HepG2 (cell line): ENCODE measurements at regions of chr19 and their contacts with region 1.

Region 1: GRCh38 chr19:3984908-3985642 is at the start of gene EEF2:
- DNase-seq: peak; percentile 69
- ATAC-seq: peak; percentile 31
- H3K4me3 ChIP-seq: peak within 1 kb of the TSS; percentile 93 to 100 (median 95)
- H3K27ac ChIP-seq: peak within 1 kb of the TSS; percentile 92
- H3K4me1 ChIP-seq: peaks cover 57% of the 10 kb centered on the region
- H3K27me3 ChIP-seq: no peaks in the 10 kb centered on the region; a peak in 1 of 5 replicates
- CTCF ChIP-seq: no peak
- EP300 ChIP-seq: peak in 1 of 2 experiments; percentile 28; a peak in 1 of 4 replicates
- POLR2A ChIP-seq: peak; percentile 99
- RAD21 ChIP-seq: peak; percentile 59
- total RNA-seq, gene EEF2: 1,722 and 1,777 TPM in 2 replicates

Region 2: GRCh38 chr19:3970808-3971598 is 14.1 kb before region 1 on chr19 and contains the start of gene DAPK3:
- CTCF ChIA-PET with region 1: no interaction called
- POLR2A ChIA-PET with region 1: interaction called, 118 read pairs
- in situ Hi-C with region 1: no loop called
- intact Hi-C with region 1: no loop called
- DNase-seq: peak; percentile 95
- ATAC-seq: peak; percentile 80
- H3K4me3 ChIP-seq: peak within 1 kb of the TSS; percentile 95 to 98 (median 97)
- H3K27ac ChIP-seq: peak within 1 kb of the TSS; percentile 72
- H3K4me1 ChIP-seq: peaks cover 28% of the 10 kb centered on the region
- H3K27me3 ChIP-seq: no peaks in the 10 kb centered on the region; a peak in 1 of 5 replicates
- CTCF ChIP-seq: no peak
- EP300 ChIP-seq: no peak
- POLR2A ChIP-seq: peak; percentile 50 to 68
- RAD21 ChIP-seq: no peak; the same call in 1 of the 2 replicates
- total RNA-seq, gene DAPK3: 22.0 and 30.5 TPM in 2 replicates

Region 3: GRCh38 chr19:4007021-4007835 is 22.2 kb after region 1 on chr19 and contains the start of gene PIAS4:
- CTCF ChIA-PET with region 1: no interaction called
- POLR2A ChIA-PET with region 1: interaction called, 12 read pairs
- in situ Hi-C with region 1: no loop called
- intact Hi-C with region 1: no loop called
- DNase-seq: peak; percentile 87
- ATAC-seq: peak; percentile 91
- H3K4me3 ChIP-seq: peak within 1 kb of the TSS; percentile 90 to 100 (median 98)
- H3K27ac ChIP-seq: peak within 1 kb of the TSS; percentile 78
- H3K4me1 ChIP-seq: peaks cover 33% of the 10 kb centered on the region
- H3K27me3 ChIP-seq: no peaks in the 10 kb centered on the region; a peak in 1 of 5 replicates
- CTCF ChIP-seq: peak; percentile 35
- EP300 ChIP-seq: no peak; a peak in 1 of 4 replicates
- POLR2A ChIP-seq: peak; percentile 55 to 90; a peak in 3 of 4 replicates
- RAD21 ChIP-seq: peak; percentile 43; the same call in 1 of the 2 replicates
- total RNA-seq, gene PIAS4: 20.1 and 22.4 TPM in 2 replicates

Region 4: DNA sequence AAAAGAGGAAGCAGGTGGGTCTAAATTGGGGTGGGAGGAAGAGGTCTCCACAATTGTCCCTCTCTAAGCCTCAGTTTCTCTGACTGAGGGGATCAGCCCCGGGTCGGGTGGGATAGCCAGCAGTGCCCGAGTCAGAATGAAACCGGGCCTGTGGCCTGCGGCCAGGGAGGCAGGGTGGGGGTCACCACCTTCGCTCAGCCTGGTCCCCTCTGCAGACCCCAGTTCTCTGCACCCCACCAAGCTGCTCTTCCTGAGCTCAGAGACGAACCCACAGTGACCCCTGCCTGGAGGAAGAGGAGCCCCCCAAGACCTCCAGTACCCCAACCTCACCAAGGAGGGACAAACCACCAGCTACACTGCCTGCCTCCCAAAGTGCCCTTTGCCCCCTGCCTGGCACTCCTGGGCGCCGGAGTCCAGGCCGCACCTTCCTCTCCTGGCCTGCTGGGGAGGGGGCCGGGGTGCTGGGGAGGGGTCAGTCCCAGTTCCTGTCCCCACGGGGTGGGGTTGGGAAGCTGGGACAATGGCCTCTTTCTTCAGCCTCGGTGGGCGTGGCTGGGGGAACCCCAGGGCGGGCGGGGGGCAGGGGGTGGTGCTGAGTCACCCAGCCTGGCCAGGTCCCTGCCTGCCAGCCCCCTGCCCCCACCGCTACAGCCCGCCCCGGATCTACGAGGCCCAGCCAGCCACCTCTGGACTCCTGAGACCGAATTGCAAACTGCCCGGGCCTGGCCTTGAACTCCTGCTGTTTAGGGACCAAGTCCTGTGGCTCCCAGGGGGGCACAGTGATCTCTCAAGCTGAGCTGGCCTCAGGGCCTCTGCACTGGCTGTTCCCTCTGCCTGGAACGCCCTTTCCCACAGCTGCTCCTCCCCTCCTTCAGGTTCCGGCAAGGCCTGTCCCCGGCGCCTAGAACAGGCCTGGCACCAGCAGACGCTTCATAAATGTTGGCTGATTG is 67.2 kb after region 1 on chr19:
- CTCF ChIA-PET with region 1: no interaction called
- POLR2A ChIA-PET with region 1: interaction called, 5 read pairs
- in situ Hi-C with region 1: no loop called
- intact Hi-C with region 1: loop called (anchors 1 kb)
- DNase-seq: peak; percentile 95
- ATAC-seq: peak; percentile 86
- H3K4me3 ChIP-seq: peak overlapping the region; percentile 42 to 70 (median 44); a peak in 5 of 6 replicates
- H3K27ac ChIP-seq: peak overlapping the region; percentile 99
- H3K4me1 ChIP-seq: peaks cover 33% of the 10 kb centered on the region
- H3K27me3 ChIP-seq: no peaks in the 10 kb centered on the region
- CTCF ChIP-seq: no peak; the same call in none of the 2 replicates
- EP300 ChIP-seq: peak; percentile 76 to 84; a peak in 3 of 4 replicates
- POLR2A ChIP-seq: peak; percentile 67; a peak in 3 of 4 replicates
- RAD21 ChIP-seq: peak; percentile 74

Region 5: DNA sequence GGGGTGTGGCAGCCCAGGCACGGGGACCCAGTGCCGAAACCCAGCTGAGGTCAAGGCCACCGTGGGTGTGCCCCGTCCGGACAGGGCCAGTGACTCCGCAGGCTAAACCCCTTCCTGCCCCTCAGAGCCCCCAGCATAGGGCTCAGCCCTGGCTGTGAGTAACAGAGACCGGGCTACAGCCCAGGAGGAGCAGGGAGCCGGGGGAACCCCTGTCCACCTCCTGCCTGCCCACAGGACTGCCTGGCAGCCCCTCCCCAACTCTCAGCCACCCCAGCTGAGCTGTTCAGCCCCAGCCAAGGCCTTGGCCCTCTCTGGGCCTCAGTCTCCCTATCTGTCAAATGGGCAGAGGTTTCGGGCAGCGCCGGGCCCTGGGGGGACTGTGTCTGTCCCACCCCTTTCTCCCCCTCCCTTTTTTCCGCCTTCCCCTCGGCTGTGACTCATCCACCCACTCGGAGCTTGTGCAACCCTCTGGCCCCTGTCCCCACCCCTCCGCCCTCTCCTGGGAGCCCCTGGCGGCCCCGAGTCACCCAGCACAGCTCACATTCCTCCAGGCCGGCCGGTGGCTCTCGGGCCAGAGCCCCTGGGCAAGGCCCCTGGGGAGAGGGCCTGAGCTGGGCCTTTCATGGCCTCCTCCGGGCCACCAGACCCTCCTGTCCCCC is 73.1 kb after region 1 on chr19:
- CTCF ChIA-PET with region 1: no interaction called
- POLR2A ChIA-PET with region 1: interaction called, 10 read pairs
- in situ Hi-C with region 1: no loop called
- intact Hi-C with region 1: loop called (anchors 1 kb)
- DNase-seq: peak; percentile 90
- ATAC-seq: peak; percentile 85
- H3K4me3 ChIP-seq: peak overlapping the region; percentile 33 to 69 (median 58)
- H3K27ac ChIP-seq: peak overlapping the region; percentile 94
- H3K4me1 ChIP-seq: peaks cover 69% of the 10 kb centered on the region
- H3K27me3 ChIP-seq: no peaks in the 10 kb centered on the region
- CTCF ChIP-seq: peak; percentile 67
- EP300 ChIP-seq: peak; percentile 11 to 45; a peak in 2 of 4 replicates
- POLR2A ChIP-seq: peak; percentile 78 to 80
- RAD21 ChIP-seq: peak; percentile 29; the same call in 1 of the 2 replicates

Region 6: DNA sequence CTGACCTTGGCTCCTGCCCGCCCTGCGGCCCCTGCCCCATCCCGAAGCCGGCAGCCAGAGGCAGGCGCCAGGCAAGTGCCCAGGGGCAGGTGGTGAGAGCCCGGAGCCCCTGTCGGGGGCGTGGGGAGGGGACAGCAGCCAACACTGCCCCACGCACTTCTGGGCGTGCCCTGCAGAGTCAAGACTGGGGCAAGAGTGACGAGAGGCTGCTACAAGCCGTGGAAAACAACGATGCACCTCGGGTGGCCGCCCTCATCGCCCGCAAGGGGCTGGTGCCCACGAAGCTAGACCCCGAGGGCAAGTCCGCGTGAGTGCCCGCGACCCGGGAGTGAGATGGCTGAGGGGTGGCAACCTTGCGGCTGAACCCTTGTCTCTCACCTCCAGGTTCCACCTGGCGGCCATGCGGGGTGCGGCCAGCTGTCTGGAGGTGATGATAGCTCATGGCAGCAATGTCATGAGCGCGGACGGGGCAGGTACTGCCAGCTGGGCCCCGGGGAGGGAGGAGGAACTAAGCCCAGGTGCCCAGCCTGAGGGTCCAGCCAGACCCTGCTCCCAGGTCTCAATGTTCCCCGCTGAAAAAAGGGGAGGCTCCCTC is 214.7 kb after region 1 on chr19:
- CTCF ChIA-PET with region 1: interaction called, 3 read pairs
- POLR2A ChIA-PET with region 1: no interaction called
- in situ Hi-C with region 1: loop called (anchors 5 kb)
- intact Hi-C with region 1: loop called (anchors 1 kb)
- DNase-seq: peak; percentile 34
- ATAC-seq: peak; percentile 80
- H3K4me3 ChIP-seq: no peak overlapping the region
- H3K27ac ChIP-seq: no peak overlapping the region
- H3K4me1 ChIP-seq: peaks cover 22% of the 10 kb centered on the region
- H3K27me3 ChIP-seq: peaks cover 7 to 48% of the 10 kb centered on the region in 2 experiments; a peak in 4 of 5 replicates
- CTCF ChIP-seq: peak; percentile 63
- EP300 ChIP-seq: no peak
- POLR2A ChIP-seq: no peak
- RAD21 ChIP-seq: no peak

Region 7: DNA sequence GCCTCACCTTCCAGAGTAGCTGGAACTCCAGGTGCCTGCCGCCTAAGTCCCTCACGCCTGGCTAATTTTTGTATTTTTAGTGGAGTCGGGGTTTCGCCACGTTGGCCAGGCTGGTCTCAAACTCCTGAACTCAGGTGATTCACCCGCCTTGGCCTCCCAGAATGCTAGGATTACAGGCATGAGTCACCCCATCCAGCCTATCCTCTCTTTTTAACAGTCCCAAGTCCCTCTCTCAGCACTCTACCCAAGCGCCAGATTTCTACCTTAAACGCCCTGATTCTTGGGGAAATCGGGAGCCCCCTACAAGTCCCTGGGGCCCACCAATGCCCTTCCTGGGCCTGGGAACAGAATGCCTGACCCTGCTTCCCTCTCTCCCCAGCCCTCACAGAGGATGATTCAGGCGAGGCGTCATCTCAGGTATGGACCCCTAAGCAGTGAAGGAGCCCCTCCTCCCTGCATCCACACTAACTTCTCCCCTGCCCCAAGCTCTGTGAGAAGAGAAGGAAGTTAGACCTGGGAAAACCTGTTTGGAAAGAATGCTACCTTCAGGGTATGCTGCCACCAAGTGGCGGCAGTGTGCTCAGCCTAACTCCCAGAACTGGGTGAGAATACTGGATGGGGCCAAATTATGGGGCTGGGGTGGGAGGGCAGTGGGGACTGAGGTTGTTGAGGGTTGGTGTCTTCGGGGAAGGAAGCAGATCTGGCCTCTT is 223.5 kb after region 1 on chr19:
- CTCF ChIA-PET with region 1: interaction called, 3 read pairs
- POLR2A ChIA-PET with region 1: no interaction called
- in situ Hi-C with region 1: loop called (anchors 5 kb)
- intact Hi-C with region 1: loop called (anchors 1 kb)
- DNase-seq: peak; percentile 52
- ATAC-seq: peak; percentile 56
- H3K4me3 ChIP-seq: no peak overlapping the region
- H3K27ac ChIP-seq: no peak overlapping the region
- H3K4me1 ChIP-seq: peaks cover 22% of the 10 kb centered on the region
- H3K27me3 ChIP-seq: peaks cover 0 to 9% of the 10 kb centered on the region in 2 experiments; a peak in 3 of 5 replicates
- CTCF ChIP-seq: peak; percentile 73
- EP300 ChIP-seq: no peak
- POLR2A ChIP-seq: no peak
- RAD21 ChIP-seq: no peak